SK-N-SH (cell line): ENCODE measurements at regions of chr9 and their contacts with region 1.

Region 1: GRCh38 chr9:129726322-129727160 is 26.3 kb downstream of the PTGES start:
- DNase-seq: peak; percentile 97
- H3K4me3 ChIP-seq: no peak overlapping the region
- H3K27ac ChIP-seq: 0 out of 4 replicates have a peak overlapping the region, but pooled peaks of 1 of the 2 experiments have one; percentile 30
- H3K4me1 ChIP-seq: peaks cover 0 to 7% of the 10 kb centered on the region in 2 experiments; a peak in 1 of 4 replicates
- H3K27me3 ChIP-seq: 0 out of 2 replicates have a peak, but pooled peaks cover 3% of the 10 kb centered on the region
- CTCF ChIP-seq: peak; percentile 89
- EP300 ChIP-seq: no peak
- RAD21 ChIP-seq: peak; percentile 72

Region 2: DNA sequence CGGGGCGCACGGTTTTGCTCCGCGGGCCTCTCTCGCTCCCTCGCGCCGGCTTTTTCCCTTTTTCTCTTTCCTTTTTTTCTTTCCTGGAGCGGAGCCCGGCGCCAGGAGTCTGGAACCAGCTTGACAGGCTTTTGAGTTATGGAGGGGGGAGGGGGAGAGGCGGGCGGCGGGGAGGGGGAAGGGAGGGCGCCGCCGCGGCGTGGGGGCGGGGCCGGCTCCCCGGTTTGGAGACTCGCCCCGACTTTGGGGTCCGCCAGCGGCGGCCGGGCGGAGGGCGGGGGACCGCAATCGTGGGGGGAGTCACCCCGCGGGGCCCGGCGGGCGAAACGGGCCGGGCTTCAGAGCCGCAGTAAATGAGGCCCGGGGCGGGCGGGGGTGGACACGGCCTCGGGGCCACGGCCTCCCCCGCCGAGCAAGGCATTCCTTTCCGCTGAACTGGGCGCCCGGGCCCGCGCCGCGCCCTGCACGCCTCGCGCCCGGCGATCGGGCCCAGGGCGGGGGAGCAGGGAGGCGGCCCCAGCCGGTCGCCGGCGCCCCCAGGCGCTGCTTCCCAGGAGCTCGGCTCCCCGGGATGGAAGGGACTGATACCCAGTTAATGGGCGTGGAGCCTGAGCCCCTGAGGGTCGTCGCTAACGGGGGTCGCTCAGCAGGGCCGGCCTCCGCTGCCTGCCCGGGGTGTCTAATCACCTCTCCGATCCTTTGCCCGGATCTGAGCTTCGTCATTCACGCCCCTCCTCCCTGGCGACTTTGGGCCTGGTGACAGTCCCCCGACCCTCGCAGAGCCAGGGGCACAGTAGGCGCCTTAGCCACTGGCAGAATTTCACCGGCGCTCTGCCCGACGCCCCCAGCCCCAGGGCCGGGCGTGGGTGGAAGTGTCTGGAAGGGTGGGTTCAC is 243.8 kb before region 1 on chr9:
- CTCF ChIA-PET with region 1: no interaction called
- POLR2A ChIA-PET with region 1: no interaction called
- DNase-seq: peak; percentile 90
- H3K4me3 ChIP-seq: peak overlapping the region; percentile 37 to 51; a peak in 3 of 4 replicates
- H3K27ac ChIP-seq: peak overlapping the region; percentile 97 to 100
- H3K4me1 ChIP-seq: peaks cover 55 to 78% of the 10 kb centered on the region in 2 experiments; a peak in 3 of 4 replicates
- H3K27me3 ChIP-seq: no peaks in the 10 kb centered on the region
- CTCF ChIP-seq: no peak
- EP300 ChIP-seq: peak in 1 of 2 experiments; percentile 53; a peak in 1 of 4 replicates
- RAD21 ChIP-seq: peak; percentile 35

Region 3: DNA sequence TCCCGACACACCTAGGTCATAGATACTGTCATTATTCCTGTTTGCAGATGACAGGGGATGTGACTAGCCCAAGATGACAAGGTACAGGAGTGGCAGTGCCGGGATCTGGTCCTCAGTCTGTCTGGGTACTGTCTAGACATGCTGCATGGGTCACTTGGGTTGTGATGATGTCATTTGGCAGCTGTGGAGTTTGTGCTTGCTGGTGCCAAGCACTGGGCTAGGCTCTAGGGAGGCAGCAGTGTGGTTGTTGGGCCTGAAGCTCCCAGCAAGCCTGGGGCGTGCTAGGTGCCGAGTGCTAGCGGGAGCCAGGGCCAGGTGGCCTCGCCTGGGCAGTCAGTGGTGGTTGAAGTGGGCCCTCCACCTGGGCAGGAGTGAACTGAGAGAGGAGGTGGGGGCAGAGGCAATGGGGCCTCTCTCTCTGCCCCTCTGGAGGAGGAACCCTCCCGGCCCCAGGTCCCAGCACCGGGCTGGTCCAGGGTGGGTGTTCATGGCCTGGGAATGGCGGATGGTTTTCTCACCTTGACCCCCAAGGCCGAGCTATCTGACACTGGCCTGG is 75.8 kb before region 1 on chr9:
- CTCF ChIA-PET with region 1: interaction called, 16 read pairs
- POLR2A ChIA-PET with region 1: interaction called, 3 read pairs
- DNase-seq: no peak
- H3K4me3 ChIP-seq: no peak overlapping the region
- H3K27ac ChIP-seq: peak overlapping the region in 1 of 2 experiments; percentile 97; a peak in 2 of 4 replicates
- H3K4me1 ChIP-seq: peaks cover 0 to 36% of the 10 kb centered on the region in 2 experiments; a peak in 2 of 4 replicates
- H3K27me3 ChIP-seq: no peaks in the 10 kb centered on the region
- CTCF ChIP-seq: no peak
- EP300 ChIP-seq: no peak
- RAD21 ChIP-seq: no peak

Region 4: GRCh38 chr9:129696938-129697650 is 29.4 kb before region 1 on chr9:
- CTCF ChIA-PET with region 1: interaction called, 31 read pairs
- POLR2A ChIA-PET with region 1: no interaction called
- DNase-seq: peak; percentile 96
- H3K4me3 ChIP-seq: peak overlapping the region in 1 of 2 experiments; percentile 42; a peak in 3 of 4 replicates
- H3K27ac ChIP-seq: peak overlapping the region in 1 of 2 experiments; percentile 88; a peak in 2 of 4 replicates
- H3K4me1 ChIP-seq: peaks cover 0 to 18% of the 10 kb centered on the region in 2 experiments; a peak in 2 of 4 replicates
- H3K27me3 ChIP-seq: no peaks in the 10 kb centered on the region
- CTCF ChIP-seq: no peak
- EP300 ChIP-seq: no peak
- RAD21 ChIP-seq: no peak

Region 5: DNA sequence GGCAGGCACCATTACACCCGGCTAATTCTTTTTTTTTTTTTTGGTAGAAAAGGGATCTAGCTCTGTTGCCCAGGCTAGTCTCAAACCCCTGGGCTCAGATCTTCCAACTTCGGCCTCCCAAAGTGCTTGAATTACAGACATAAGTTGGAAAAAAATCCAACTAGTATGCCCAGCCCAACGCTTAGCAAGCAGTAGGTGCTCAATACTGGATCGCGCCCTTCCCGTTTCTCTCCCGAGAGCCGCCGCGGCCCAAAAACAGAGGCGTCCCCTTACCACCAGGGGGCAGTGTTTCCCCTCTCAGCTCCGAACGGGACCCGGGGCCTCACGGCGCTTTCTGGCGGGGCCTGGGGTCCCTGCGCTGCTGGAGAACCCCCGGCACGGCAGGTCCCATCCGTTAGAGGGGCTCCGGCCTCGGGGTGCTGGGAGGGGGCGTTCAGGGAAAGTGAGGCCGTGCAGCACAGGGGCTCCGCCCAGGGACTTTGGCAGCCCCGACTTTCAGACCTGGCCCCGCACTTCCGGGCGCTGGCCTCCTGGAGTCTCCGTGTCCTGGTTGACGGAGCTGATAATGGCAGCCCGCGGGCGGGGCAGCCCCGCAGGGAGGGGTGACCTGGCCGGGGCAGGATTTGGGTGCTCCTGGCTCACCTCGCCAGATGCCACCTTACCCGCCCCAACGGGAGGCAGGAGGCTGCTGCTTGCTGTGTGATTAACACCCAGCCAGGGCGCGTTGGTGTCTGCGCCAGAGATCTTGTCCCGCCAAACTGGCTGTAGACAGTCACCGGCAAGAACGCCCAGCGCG is 11.1 kb after region 1 on chr9:
- CTCF ChIA-PET with region 1: interaction called, 115 read pairs
- POLR2A ChIA-PET with region 1: no interaction called
- DNase-seq: peak; percentile 94
- H3K4me3 ChIP-seq: peak overlapping the region; percentile 49 to 70
- H3K27ac ChIP-seq: no peak overlapping the region
- H3K4me1 ChIP-seq: peaks cover 0 to 5% of the 10 kb centered on the region in 2 experiments; a peak in 1 of 4 replicates
- H3K27me3 ChIP-seq: no peaks in the 10 kb centered on the region
- CTCF ChIP-seq: peak; percentile 92
- EP300 ChIP-seq: no peak
- RAD21 ChIP-seq: peak; percentile 79

Region 6: DNA sequence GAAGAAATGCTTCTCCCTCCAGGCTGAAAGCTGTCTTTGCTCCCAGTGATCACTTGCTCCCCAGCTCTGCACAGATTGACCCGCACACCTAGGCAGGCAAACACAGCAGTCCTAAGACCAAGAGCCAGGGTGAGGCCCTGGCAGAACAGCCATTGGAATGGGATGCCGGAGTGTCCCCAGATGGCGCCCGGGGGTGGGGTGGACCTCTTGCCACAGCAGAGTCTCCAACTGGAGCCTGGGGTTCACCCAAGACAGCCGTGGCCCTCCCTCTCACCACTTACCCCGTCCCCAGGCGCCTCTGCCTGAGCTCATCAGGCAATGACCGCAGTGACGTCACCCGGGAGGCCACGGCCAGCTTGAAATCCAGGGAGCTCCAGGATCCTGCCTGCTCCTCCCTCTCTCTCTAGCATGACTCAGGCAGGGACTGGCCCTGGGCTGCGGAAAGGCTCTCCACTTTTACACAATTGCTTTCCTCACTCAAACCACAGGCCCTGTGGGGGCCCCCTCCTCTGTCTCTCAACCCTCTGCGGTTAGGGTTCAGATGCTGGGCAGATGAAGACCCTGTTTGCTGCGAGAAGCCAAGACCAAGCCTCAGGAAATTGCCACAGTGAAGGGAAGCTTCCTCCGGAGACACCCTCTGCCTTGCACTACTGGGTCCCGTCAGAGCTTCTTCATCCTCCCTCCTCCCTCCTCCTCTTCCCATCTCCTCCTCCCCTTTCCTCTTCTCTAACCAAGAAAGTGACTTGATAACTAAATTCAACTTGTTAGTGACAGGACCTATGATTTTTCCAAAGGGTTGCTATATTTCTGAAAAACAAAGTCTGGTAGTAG is 50.6 kb after region 1 on chr9:
- CTCF ChIA-PET with region 1: interaction called, 88 read pairs
- POLR2A ChIA-PET with region 1: no interaction called
- DNase-seq: peak; percentile 45
- H3K4me3 ChIP-seq: no peak overlapping the region; a peak in 1 of 4 replicates
- H3K27ac ChIP-seq: peak overlapping the region; percentile 13 to 79; a peak in 3 of 4 replicates
- H3K4me1 ChIP-seq: peaks cover 4 to 6% of the 10 kb centered on the region in 2 experiments; a peak in 1 of 4 replicates
- H3K27me3 ChIP-seq: no peaks in the 10 kb centered on the region
- CTCF ChIP-seq: no peak
- EP300 ChIP-seq: peak in 1 of 2 experiments; percentile 49; a peak in 1 of 4 replicates
- RAD21 ChIP-seq: no peak